ENCODE measurements at regions of chr10 and their contacts with region 1.

Region 1: GRCh38 chr10:44974628-44975431 is 3.8 kb downstream of the DEPP1 start:
- H3K4me3 ChIP-seq: peak overlapping the region; percentile 39
- H3K27ac ChIP-seq: peak overlapping the region; percentile 28; the same call in 1 of the 2 replicates
- H3K4me1 ChIP-seq: peaks cover 18% of the 10 kb centered on the region
- CTCF ChIP-seq: peak; percentile 82

Region 2: DNA sequence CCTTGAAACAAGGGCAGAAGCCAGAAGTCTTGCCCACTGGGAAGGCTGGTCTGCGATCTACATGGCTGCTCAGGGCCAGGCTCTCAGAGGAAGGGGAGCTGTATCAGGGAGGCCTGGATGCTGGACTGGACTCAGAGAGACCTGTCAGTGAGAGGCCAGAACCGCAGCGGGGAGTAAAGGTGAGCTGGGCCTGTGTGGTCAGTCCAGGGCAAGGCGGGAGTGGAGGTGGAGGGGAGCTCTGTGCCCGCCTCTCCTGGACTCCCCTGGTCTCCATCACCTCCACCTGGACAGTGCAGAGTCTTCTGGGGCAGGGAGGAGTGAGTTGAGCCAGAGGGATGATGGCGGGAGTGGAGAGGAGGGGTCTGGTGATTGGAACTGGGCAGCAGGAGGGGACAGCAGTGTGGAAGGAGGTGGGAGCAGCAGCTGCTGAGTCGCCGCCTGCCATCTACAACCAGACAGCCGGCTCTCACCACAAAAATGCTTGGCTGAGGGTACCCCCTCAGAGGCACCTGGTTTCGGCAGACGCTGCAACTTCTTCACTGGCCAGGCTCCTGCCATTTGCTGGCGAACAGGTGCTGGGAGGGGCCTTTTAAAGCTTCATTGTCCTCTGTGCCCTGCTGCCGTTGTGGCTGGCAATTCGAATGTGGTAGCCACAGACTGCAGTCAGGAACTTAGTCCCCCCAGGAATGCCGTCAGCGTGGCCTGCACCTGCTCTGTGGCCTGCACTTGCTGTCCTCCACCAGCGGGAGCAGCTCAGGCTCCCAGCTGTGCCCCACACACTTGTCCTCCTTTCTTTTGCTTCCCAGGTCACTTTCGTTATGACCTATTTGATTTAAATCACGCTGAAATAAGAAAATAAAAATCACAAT is 11.7 kb before region 1 on chr10:
- CTCF ChIA-PET with region 1: interaction called, 7 read pairs
- POLR2A ChIA-PET with region 1: interaction called, 12 read pairs
- H3K4me3 ChIP-seq: no peak overlapping the region
- H3K27ac ChIP-seq: no peak overlapping the region
- H3K4me1 ChIP-seq: peaks cover 10% of the 10 kb centered on the region; the same call in 1 of the 2 replicates
- CTCF ChIP-seq: no peak

Region 3: DNA sequence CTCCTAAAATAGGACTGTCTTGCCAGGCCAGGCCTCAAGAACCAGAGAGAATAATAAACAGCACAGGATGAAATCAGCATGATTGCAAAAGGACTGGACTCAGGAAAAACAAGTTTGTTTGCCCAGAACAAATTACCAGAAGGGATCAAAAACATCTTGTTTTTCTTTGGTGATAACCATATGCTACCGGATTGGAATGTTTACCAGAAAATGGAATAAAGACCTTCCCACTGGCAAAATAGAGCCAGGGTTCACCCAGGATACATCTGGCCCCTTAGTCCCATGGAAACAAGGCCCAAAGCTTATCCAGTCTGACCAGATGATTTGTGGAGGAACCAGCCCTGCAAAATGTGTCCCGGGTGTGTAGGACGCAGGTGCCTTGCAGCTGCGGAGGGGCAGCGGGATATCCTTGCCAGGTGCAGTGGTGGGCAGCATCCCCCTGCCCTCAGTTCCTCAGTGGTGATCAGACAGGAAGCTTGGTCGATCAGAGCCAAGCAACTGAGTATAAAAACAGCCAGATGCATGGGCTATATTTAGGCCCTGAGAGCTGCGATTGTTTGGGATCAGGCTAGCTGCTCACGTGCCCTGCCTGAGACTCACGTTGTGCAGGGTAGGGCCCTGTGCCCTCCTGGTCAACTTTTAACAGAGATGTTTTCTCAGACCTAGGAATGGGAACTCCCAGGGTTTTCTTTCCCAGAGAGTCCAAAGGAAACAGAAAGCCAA is 21.2 kb after region 1 on chr10:
- CTCF ChIA-PET with region 1: interaction called, 3 read pairs
- POLR2A ChIA-PET with region 1: interaction called, 10 read pairs
- H3K4me3 ChIP-seq: no peak overlapping the region
- H3K27ac ChIP-seq: no peak overlapping the region
- H3K4me1 ChIP-seq: no peaks in the 10 kb centered on the region
- CTCF ChIP-seq: no peak